GM23248 (cell line): ENCODE measurements at regions of chr14 and their contacts with region 1.

Region 1: GRCh38 chr14:20690848-20691523 is 2.4 kb downstream of the ANG start:
- DNase-seq: peak; percentile 84
- H3K4me3 ChIP-seq: no peak overlapping the region
- H3K27ac ChIP-seq: no peak overlapping the region
- H3K4me1 ChIP-seq: peaks cover 12% of the 10 kb centered on the region; the same call in 1 of the 2 replicates
- H3K27me3 ChIP-seq: no peaks in the 10 kb centered on the region

Region 2: GRCh38 chr14:20327005-20327869 is 363.7 kb before region 1 on chr14:
- in situ Hi-C with region 1: loop called (anchors 10 kb)
- DNase-seq: peak; percentile 78
- H3K4me3 ChIP-seq: 0 out of 2 replicates have a peak overlapping the region, but pooled peaks have one; percentile 26
- H3K27ac ChIP-seq: peak overlapping the region; percentile 37
- H3K4me1 ChIP-seq: peaks cover 9% of the 10 kb centered on the region; the same call in 1 of the 2 replicates
- H3K27me3 ChIP-seq: no peaks in the 10 kb centered on the region